Naive thymus-derived CD4-positive, alpha-beta T cell (primary cell): ENCODE measurements at regions of chr1 and their contacts with region 1.

Region 1: DNA sequence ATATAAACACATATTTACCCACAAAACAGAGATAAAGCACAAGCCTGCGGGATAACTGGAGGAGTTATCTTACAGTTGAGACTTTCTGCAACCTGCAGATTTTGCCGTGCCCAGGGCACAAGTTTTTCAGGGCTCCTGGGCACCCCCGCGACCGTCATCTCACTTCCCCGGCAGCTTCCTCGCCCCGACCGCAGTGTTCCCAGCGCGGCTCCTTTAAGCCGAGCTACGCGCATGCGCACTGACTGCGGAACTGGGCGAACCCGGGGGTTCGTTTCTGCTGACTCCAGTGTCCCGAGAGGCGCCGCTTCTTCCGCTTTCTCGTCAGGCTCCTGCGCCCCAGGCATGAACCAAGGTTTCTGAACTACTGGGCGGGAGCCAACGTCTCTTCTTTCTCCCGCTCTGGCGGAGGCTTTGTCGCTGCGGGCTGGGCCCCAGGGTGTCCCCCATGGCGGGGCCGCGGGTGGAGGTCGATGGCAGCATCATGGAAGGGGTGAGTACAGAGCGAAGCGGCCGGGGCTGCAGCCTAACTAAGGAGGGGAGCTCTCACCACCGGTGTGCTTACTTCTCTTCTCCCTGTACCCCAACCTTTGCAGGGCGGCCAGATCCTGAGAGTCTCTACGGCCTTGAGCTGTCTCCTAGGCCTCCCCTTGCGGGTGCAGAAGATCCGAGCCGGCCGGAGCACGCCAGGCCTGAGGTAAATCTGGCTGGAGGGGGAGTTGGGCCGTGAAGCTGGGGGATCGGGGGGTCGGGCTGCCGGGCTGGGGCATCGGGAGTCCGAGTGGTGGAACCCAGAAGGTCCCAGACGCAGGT is at the start of gene RTCA:
- DNase-seq: peak; percentile 91 to 95 (median 94)
- ATAC-seq: peak; percentile 98
- H3K4me3 ChIP-seq: peak within 1 kb of the TSS; percentile 88
- H3K4me3 Mint-ChIP-seq: peak within 1 kb of the TSS; percentile 97 to 100 (median 100)
- H3K27ac ChIP-seq: peak within 1 kb of the TSS; percentile 88
- H3K27ac Mint-ChIP-seq: peak within 1 kb of the TSS; percentile 94 to 99 (median 97)
- H3K4me1 ChIP-seq: peaks cover 25 to 26% of the 10 kb centered on the region in 2 donors
- H3K4me1 Mint-ChIP-seq: peaks cover 23 to 58% (median 51%) of the 10 kb centered on the region in 7 donors
- H3K27me3 ChIP-seq: no peaks in the 10 kb centered on the region
- H3K27me3 Mint-ChIP-seq: peaks cover 0 to 3% (median 0%) of the 10 kb centered on the region in 5 donors
- total RNA-seq, gene RTCA: 33.3 to 47.7 (median 35.8) TPM

Region 2: DNA sequence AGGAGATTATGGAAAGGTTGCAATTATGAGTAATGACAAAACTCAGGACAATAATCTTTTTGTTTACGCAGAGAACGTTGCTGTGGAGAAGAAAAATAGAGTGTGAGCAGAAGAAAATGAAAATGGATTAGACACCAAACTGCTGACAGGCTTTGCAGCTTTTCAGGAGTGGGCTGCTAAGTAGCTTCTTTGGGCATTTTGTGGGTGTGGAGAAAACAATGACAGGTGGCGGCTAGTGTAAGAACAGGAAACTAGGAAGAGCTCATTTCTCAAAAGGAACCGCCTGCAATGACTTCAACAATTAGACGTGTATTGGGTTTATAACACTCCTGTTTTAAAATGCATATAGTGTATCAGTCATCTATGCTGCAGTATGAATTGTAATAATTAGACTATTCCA is 638.5 kb before region 1 on chr1:
- CTCF ChIA-PET with region 1: no interaction called
- POLR2A ChIA-PET with region 1: no interaction called
- intact Hi-C with region 1: no loop called
- DNase-seq: no peak
- ATAC-seq: no peak
- H3K4me3 ChIP-seq: no peak overlapping the region
- H3K4me3 Mint-ChIP-seq: no peak overlapping the region
- H3K27ac ChIP-seq: no peak overlapping the region
- H3K27ac Mint-ChIP-seq: no peak overlapping the region
- H3K4me1 ChIP-seq: no peaks in the 10 kb centered on the region
- H3K4me1 Mint-ChIP-seq: no peaks in the 10 kb centered on the region
- H3K27me3 ChIP-seq: no peaks in the 10 kb centered on the region
- H3K27me3 Mint-ChIP-seq: peaks cover 0 to 7% (median 0%) of the 10 kb centered on the region in 5 donors

Region 3: DNA sequence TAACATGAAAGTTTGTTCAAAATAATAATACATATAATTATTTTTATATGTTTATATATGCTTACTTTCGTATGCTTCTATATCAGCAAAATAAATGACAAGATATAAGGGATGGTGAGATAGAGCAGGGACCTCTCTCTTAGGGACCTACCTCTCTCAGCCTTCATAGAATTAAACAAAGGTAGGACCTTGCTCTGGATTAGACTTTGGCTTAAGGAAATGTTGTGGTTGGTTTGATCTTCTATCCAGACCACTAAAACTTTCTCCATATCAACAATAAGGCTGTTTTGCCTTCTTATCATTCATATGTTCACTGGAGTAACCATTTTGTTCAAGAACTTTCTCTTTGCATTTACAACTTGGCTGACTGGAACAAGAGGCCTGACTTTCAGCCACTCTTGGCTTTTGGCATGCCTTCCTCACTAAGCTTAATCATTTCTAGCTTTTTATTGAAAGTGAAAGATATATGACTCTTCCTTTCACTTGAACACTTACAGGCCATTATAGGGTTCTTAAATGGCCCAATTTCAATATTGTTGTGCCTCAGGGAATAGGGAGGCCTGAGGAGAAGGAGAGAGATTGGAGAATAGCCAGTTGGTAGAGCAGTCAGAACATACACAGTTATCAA is 514.1 kb before region 1 on chr1:
- CTCF ChIA-PET with region 1: no interaction called
- POLR2A ChIA-PET with region 1: no interaction called
- intact Hi-C with region 1: no loop called
- DNase-seq: no peak
- ATAC-seq: no peak
- H3K4me3 ChIP-seq: no peak overlapping the region
- H3K4me3 Mint-ChIP-seq: no peak overlapping the region
- H3K27ac ChIP-seq: no peak overlapping the region
- H3K27ac Mint-ChIP-seq: no peak overlapping the region
- H3K4me1 ChIP-seq: no peaks in the 10 kb centered on the region
- H3K4me1 Mint-ChIP-seq: peaks cover 0 to 12% (median 0%) of the 10 kb centered on the region in 7 donors
- H3K27me3 ChIP-seq: no peaks in the 10 kb centered on the region
- H3K27me3 Mint-ChIP-seq: peaks cover 0 to 4% (median 2%) of the 10 kb centered on the region in 5 donors

Region 4: GRCh38 chr1:99814373-99814900 is 451.7 kb before region 1 on chr1:
- CTCF ChIA-PET with region 1: no interaction called
- POLR2A ChIA-PET with region 1: no interaction called
- intact Hi-C with region 1: loop called in 1 of 2 experiments (anchors 5 kb)
- DNase-seq: no peak
- ATAC-seq: no peak
- H3K4me3 ChIP-seq: no peak overlapping the region
- H3K4me3 Mint-ChIP-seq: no peak overlapping the region
- H3K27ac ChIP-seq: no peak overlapping the region
- H3K27ac Mint-ChIP-seq: no peak overlapping the region
- H3K4me1 ChIP-seq: no peaks in the 10 kb centered on the region
- H3K4me1 Mint-ChIP-seq: peaks cover 0 to 5% (median 0%) of the 10 kb centered on the region in 7 donors
- H3K27me3 ChIP-seq: no peaks in the 10 kb centered on the region
- H3K27me3 Mint-ChIP-seq: peaks cover 0 to 15% (median 4%) of the 10 kb centered on the region in 5 donors

Region 5: DNA sequence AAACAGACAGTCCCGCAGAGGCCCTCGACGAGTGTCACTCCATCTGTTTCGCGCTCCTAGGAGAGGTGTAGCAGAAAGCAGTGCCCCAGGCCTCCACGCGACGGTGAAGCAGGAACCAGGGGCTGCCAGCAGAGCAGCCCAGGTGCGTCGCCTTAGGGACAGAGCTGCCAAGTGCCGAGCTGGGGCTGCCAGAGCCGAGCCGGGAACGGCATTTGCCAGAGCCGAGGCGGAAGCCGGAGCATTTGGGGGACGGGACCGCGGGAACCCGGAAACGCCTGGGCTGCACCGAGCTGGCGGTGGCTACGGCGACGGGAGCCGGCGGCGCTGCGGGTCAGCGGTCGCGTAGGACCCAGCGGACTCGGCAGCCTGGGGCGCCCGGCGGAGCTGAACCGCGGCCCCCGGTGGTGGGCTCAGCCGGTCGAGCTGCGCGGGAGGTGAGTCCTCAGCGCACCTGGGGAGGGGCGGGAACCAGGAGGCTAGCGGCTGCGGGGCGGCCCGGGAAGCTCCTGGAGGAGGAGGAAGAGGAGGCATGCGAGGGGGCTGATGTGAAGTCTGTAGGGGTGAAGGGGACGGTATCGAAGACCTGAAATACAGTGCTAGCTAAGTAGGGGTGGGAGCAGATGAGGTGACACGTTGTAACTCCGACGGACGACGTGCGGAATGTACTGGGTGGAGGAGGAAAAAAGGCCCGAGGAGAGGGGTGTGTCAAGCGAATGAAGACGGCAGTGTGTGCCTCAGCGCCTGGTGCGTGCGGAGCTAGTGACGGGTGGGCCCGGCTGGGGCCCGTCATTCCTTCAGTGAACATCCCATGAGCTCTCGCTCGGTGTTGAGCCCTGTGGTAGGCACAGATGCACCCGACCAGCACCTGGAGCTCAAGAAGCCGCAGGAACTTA is 296.2 kb before region 1 on chr1 and contains the start of gene SLC35A3:
- CTCF ChIA-PET with region 1: no interaction called
- POLR2A ChIA-PET with region 1: interaction called, 3 read pairs
- intact Hi-C with region 1: loop called (anchors 5 kb)
- DNase-seq: peak; percentile 69 to 85 (median 78)
- ATAC-seq: peak; percentile 89
- H3K4me3 ChIP-seq: peak within 1 kb of the TSS; percentile 75
- H3K4me3 Mint-ChIP-seq: peak within 1 kb of the TSS; percentile 96 to 100 (median 100)
- H3K27ac ChIP-seq: peak within 1 kb of the TSS; percentile 83
- H3K27ac Mint-ChIP-seq: peak within 1 kb of the TSS; percentile 91 to 99 (median 97)
- H3K4me1 ChIP-seq: peaks cover 6 to 20% of the 10 kb centered on the region in 2 donors
- H3K4me1 Mint-ChIP-seq: peaks cover 22 to 55% (median 40%) of the 10 kb centered on the region in 7 donors
- H3K27me3 ChIP-seq: no peaks in the 10 kb centered on the region
- H3K27me3 Mint-ChIP-seq: no peaks in the 10 kb centered on the region
- total RNA-seq, gene SLC35A3: 21.1 to 31.6 (median 27.3) TPM

Region 6: GRCh38 chr1:100229681-100230443 is 36.3 kb before region 1 on chr1:
- CTCF ChIA-PET with region 1: no interaction called
- POLR2A ChIA-PET with region 1: no interaction called
- intact Hi-C with region 1: loop called in 1 of 2 experiments (anchors 5 kb)
- DNase-seq: no peak
- ATAC-seq: no peak
- H3K4me3 ChIP-seq: no peak overlapping the region
- H3K4me3 Mint-ChIP-seq: no peak overlapping the region
- H3K27ac ChIP-seq: no peak overlapping the region
- H3K27ac Mint-ChIP-seq: no peak overlapping the region
- H3K4me1 ChIP-seq: no peaks in the 10 kb centered on the region
- H3K4me1 Mint-ChIP-seq: peaks cover 0 to 5% (median 0%) of the 10 kb centered on the region in 7 donors
- H3K27me3 ChIP-seq: no peaks in the 10 kb centered on the region
- H3K27me3 Mint-ChIP-seq: no peaks in the 10 kb centered on the region

Region 7: DNA sequence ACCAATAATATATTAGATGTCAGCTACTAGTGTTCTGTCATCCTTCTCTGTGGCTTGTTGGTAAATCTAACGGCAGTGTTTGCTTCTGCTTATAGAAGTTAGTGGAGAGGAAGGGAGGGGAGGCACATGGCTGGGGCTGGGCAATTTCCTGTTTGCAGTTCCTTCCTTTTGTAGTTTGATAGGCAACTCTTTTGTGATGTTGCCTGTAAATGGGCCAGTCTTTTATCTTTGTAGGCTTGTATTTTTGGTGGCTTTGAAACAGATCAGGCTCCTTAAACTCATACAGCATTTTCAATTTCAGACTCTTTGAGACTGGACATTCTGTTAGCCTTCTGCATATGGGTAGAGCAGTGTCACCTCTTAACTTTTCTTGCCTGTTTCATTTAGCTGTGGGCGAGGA is 134.3 kb after region 1 on chr1:
- CTCF ChIA-PET with region 1: no interaction called
- POLR2A ChIA-PET with region 1: interaction called, 6 read pairs
- intact Hi-C with region 1: loop called in 1 of 2 experiments (anchors 2 kb)
- DNase-seq: peak in 8 of 9 donors; percentile 23 to 89 (median 84)
- ATAC-seq: peak; percentile 87
- H3K4me3 ChIP-seq: peak overlapping the region; percentile 46
- H3K4me3 Mint-ChIP-seq: peak overlapping the region; percentile 69 to 89 (median 81)
- H3K27ac ChIP-seq: peak overlapping the region; percentile 72
- H3K27ac Mint-ChIP-seq: peak overlapping the region; percentile 83 to 98 (median 96)
- H3K4me1 ChIP-seq: peaks cover 77 to 87% of the 10 kb centered on the region in 2 donors
- H3K4me1 Mint-ChIP-seq: peaks cover 59 to 98% (median 86%) of the 10 kb centered on the region in 7 donors
- H3K27me3 ChIP-seq: no peaks in the 10 kb centered on the region
- H3K27me3 Mint-ChIP-seq: no peaks in the 10 kb centered on the region

Region 8: DNA sequence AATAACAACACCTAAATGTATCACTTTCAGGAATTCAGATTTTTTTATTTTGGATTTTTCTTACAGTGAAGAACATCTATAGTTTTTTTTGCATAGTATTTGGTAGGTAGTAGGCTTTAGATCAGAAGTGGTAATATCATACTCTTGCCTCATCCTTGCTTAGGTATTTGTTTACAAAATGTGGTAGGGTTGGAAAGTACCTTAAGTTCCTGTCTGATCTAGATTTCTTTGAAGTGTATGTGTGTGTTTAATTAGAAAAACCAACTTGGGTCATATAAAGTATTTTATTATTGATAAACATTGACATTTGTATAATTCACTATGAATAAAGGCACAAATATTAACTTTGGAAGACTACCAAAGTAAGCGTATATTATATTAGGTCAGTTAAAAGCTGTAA is 186.5 kb after region 1 on chr1:
- CTCF ChIA-PET with region 1: interaction called, 3 read pairs
- POLR2A ChIA-PET with region 1: interaction called, 9 read pairs
- intact Hi-C with region 1: loop called in 1 of 2 experiments (anchors 2 kb)
- DNase-seq: peak in 7 of 9 donors; percentile 41 to 81 (median 64)
- ATAC-seq: peak; percentile 95
- H3K4me3 ChIP-seq: no peak overlapping the region
- H3K4me3 Mint-ChIP-seq: peak overlapping the region; percentile 20 to 63 (median 50)
- H3K27ac ChIP-seq: peak overlapping the region; percentile 80
- H3K27ac Mint-ChIP-seq: peak overlapping the region; percentile 79 to 99 (median 93)
- H3K4me1 ChIP-seq: peaks cover 55 to 59% of the 10 kb centered on the region in 2 donors
- H3K4me1 Mint-ChIP-seq: peaks cover 29 to 92% (median 84%) of the 10 kb centered on the region in 7 donors
- H3K27me3 ChIP-seq: no peaks in the 10 kb centered on the region
- H3K27me3 Mint-ChIP-seq: no peaks in the 10 kb centered on the region